ENCODE measurements at regions of chr11 and their contacts with region 1.

Region 1: GRCh38 chr11:69443138-69443967 is 38.1 kb upstream of the LINC01488 start:
- DNase-seq: peak; percentile 94
- H3K4me3 ChIP-seq: peak overlapping the region; percentile 21 to 47 (median 42)
- H3K27ac ChIP-seq: peak overlapping the region; percentile 74 to 82 (median 78)
- H3K4me1 ChIP-seq: peaks cover 0 to 29% (median 24%) of the 10 kb centered on the region in 4 donors
- H3K27me3 ChIP-seq: no peaks in the 10 kb centered on the region
- CTCF ChIP-seq: no peak
- EP300 ChIP-seq: no peak
- POLR2A ChIP-seq: peak; percentile 17 to 19

Region 2: GRCh38 chr11:69296890-69297786 is 146.2 kb before region 1 on chr11:
- intact Hi-C with region 1: loop called (anchors 5 kb)
- DNase-seq: peak; percentile 93
- H3K4me3 ChIP-seq: peak overlapping the region in 2 of 4 donors; percentile 19 to 29
- H3K27ac ChIP-seq: peak overlapping the region; percentile 70 to 77 (median 72)
- H3K4me1 ChIP-seq: peaks cover 0 to 38% (median 34%) of the 10 kb centered on the region in 4 donors
- H3K27me3 ChIP-seq: no peaks in the 10 kb centered on the region
- CTCF ChIP-seq: no peak
- EP300 ChIP-seq: no peak
- POLR2A ChIP-seq: no peak

Region 3: DNA sequence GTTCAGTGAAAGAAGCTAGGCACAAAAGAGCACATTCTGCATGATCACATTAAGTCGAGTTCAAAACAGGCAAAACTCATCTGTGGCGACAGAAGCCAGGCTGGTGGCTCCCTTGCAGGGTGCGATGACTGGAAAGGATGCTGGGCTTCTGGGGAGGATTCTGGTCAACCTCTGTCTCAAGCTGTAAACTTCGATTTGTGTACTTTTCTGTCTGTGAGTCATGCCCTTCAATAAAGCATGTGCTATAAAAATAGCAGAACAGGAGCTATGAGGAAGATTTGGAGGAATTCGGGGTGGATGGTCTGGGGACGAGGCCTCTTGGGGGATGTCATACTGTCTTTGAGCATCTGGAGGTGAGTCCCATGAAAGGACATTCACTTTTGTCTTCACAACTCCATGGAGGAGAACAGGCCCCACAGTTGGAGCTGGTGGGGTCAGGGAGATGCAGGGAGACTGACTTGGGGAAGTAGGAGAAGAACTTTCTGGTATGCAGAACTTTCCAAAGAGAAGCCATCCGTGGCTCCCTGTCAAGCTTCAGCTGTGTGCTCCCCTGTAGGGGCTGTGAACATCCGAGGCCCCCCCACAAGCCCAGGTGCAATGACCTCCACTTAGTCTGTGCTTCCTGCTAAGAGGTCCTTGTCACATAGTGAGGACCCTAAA is 39.7 kb before region 1 on chr11:
- intact Hi-C with region 1: no loop called
- DNase-seq: no peak
- H3K4me3 ChIP-seq: no peak overlapping the region
- H3K27ac ChIP-seq: no peak overlapping the region
- H3K4me1 ChIP-seq: peaks cover 0 to 14% (median 7%) of the 10 kb centered on the region in 4 donors
- H3K27me3 ChIP-seq: no peaks in the 10 kb centered on the region
- CTCF ChIP-seq: no peak
- EP300 ChIP-seq: no peak
- POLR2A ChIP-seq: no peak

Region 4: GRCh38 chr11:69493931-69494821 is 50.8 kb after region 1 on chr11:
- intact Hi-C with region 1: loop called (anchors 5 kb)
- DNase-seq: no peak
- H3K4me3 ChIP-seq: no peak overlapping the region
- H3K27ac ChIP-seq: no peak overlapping the region
- H3K4me1 ChIP-seq: peaks cover 0 to 36% (median 27%) of the 10 kb centered on the region in 4 donors
- H3K27me3 ChIP-seq: no peaks in the 10 kb centered on the region
- CTCF ChIP-seq: no peak
- EP300 ChIP-seq: no peak
- POLR2A ChIP-seq: no peak

Measured in sigmoid colon (tissue), 7 donors.